ENCODE measurements at regions of chr17 and their contacts with region 1.

Region 1: GRCh38 chr17:78840725-78841611 is at the start of gene USP36:
- DNase-seq: peak; percentile 100
- H3K4me3 Mint-ChIP-seq: peak within 1 kb of the TSS; percentile 84
- H3K27ac Mint-ChIP-seq: peak within 1 kb of the TSS; percentile 89
- H3K4me1 Mint-ChIP-seq: peaks cover 46% of the 10 kb centered on the region
- H3K27me3 Mint-ChIP-seq: no peaks in the 10 kb centered on the region
- total RNA-seq, gene USP36: 71.2 to 74.3 TPM

Region 2: GRCh38 chr17:78442648-78443128 is 398.3 kb before region 1 on chr17:
- CTCF ChIA-PET with region 1: no interaction called
- POLR2A ChIA-PET with region 1: no interaction called
- intact Hi-C with region 1: loop called (anchors 10 kb)
- DNase-seq: peak; percentile 29
- H3K4me3 Mint-ChIP-seq: no peak overlapping the region
- H3K27ac Mint-ChIP-seq: no peak overlapping the region
- H3K4me1 Mint-ChIP-seq: no peaks in the 10 kb centered on the region
- H3K27me3 Mint-ChIP-seq: no peaks in the 10 kb centered on the region

Region 3: DNA sequence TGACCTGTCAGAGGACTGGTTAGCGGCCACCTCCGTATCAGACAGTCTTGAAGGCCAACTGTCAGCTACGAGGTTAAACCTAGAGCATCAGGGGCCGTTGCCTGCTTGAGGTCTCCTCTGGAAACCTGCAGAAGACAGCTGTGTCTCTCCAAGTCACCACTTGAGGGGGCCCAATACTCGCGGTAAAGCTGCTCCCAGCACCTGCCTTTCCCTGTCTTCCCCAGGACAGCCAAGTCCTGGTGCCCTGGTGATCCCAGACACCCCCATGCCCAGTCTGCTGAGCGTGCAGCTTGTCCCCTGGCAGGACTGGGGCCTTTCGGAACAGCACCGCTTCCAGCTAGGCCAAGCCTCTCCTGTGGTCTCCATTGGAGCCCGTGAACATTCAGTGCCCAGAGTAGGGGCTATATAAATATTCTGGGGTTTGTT is 343.8 kb before region 1 on chr17:
- CTCF ChIA-PET with region 1: interaction called, 11 read pairs
- POLR2A ChIA-PET with region 1: no interaction called
- intact Hi-C with region 1: loop called (anchors 5 kb)
- DNase-seq: peak; percentile 72
- H3K4me3 Mint-ChIP-seq: no peak overlapping the region
- H3K27ac Mint-ChIP-seq: no peak overlapping the region
- H3K4me1 Mint-ChIP-seq: no peaks in the 10 kb centered on the region
- H3K27me3 Mint-ChIP-seq: no peaks in the 10 kb centered on the region

Region 4: GRCh38 chr17:78781948-78782916 is 58.7 kb before region 1 on chr17 and contains the start of gene CYTH1:
- CTCF ChIA-PET with region 1: no interaction called
- POLR2A ChIA-PET with region 1: no interaction called
- intact Hi-C with region 1: loop called (anchors 2 kb)
- DNase-seq: peak; percentile 98
- H3K4me3 Mint-ChIP-seq: peak within 1 kb of the TSS; percentile 90
- H3K27ac Mint-ChIP-seq: peak within 1 kb of the TSS; percentile 98
- H3K4me1 Mint-ChIP-seq: peaks cover 48% of the 10 kb centered on the region
- H3K27me3 Mint-ChIP-seq: no peaks in the 10 kb centered on the region
- total RNA-seq, gene CYTH1: 184 to 204 TPM

Region 5: GRCh38 chr17:78817123-78817522 is 23.8 kb before region 1 on chr17:
- CTCF ChIA-PET with region 1: interaction called, 3 read pairs
- POLR2A ChIA-PET with region 1: interaction called, 3 read pairs
- intact Hi-C with region 1: loop called (anchors 1 kb)
- DNase-seq: peak; percentile 89
- H3K4me3 Mint-ChIP-seq: peak overlapping the region; percentile 2
- H3K27ac Mint-ChIP-seq: peak overlapping the region; percentile 92
- H3K4me1 Mint-ChIP-seq: peaks cover 61% of the 10 kb centered on the region
- H3K27me3 Mint-ChIP-seq: no peaks in the 10 kb centered on the region

Measured in activated CD4-positive, alpha-beta memory T cell treated with anti-CD3 and anti-CD28 coated beads for 36 hours (primary cell).